ENCODE measurements at regions of chr7 and their contacts with region 1.

Region 1: GRCh38 chr7:46383605-46384004 is 462.5 kb upstream of the IGFBP3 start:
- DNase-seq: no peak
- H3K4me3 ChIP-seq: no peak overlapping the region
- CTCF ChIP-seq: no peak

Region 2: GRCh38 chr7:46480619-46481018 is 97.0 kb after region 1 on chr7:
- in situ Hi-C with region 1: loop called (anchors 5 kb)
- DNase-seq: no peak
- H3K4me3 ChIP-seq: no peak overlapping the region
- CTCF ChIP-seq: no peak

Region 3: GRCh38 chr7:47088329-47089067 is 704.9 kb after region 1 on chr7:
- in situ Hi-C with region 1: no loop called
- DNase-seq: peak; percentile 50
- H3K4me3 ChIP-seq: no peak overlapping the region
- CTCF ChIP-seq: peak; percentile 69

Region 4: DNA sequence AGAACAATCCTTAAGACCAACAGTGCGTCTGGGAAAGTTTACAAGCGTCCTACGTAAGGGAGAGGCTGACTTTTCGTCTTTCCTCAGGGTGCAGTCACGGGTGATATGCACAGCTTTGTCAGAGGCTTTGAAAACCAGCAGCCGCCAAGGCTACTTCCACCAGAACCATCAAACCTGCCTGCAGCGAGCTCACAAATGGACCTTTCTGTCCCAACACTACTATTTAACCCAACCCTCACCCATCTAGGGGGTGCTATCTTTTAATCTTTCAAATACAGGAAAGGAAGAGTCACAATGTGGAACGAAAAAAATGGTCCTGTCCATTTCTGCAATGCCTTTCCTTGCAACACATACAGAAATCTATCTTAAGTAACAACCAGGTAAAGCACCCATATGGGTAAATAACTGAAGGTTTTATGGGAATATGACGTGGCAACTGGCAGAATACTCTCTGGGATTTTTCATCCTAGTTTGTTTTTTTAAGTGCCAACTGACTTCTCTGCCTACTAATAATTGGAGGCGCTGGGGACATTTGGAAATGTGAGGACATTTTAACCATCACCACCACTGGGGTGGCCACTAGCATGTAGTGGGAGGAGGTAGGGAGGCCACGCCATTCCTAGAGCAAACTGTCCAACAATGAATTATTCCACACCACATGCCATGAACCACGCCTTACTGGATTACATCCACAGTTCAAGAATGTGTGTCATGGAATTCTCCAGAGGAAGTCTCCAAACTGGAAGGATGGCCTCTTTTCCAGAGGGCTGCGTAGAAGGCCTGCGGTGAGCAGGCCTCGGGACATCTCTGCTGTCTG is 1173.8 kb after region 1 on chr7:
- in situ Hi-C with region 1: no loop called
- DNase-seq: no peak
- H3K4me3 ChIP-seq: no peak overlapping the region
- CTCF ChIP-seq: no peak

Region 5: GRCh38 chr7:47693120-47693601 is 1309.6 kb after region 1 on chr7:
- in situ Hi-C with region 1: no loop called
- DNase-seq: no peak
- H3K4me3 ChIP-seq: no peak overlapping the region
- CTCF ChIP-seq: no peak

Measured in astrocyte of the cerebellum (primary cell).